ENCODE measurements at regions of chr4 and their contacts with region 1.

Region 1: GRCh38 chr4:9704551-9705332 is 76.7 kb upstream of the DRD5 start:
- DNase-seq: no peak
- ATAC-seq: no peak
- H3K4me3 ChIP-seq: no peak overlapping the region
- H3K27ac ChIP-seq: no peak overlapping the region
- H3K4me1 ChIP-seq: peaks cover 0 to 4% of the 10 kb centered on the region in 2 experiments; a peak in 2 of 5 replicates
- H3K27me3 ChIP-seq: peaks cover 0 to 5% of the 10 kb centered on the region in 2 experiments; a peak in 2 of 5 replicates
- CTCF ChIP-seq: no peak
- EP300 ChIP-seq: no peak
- POLR2A ChIP-seq: no peak
- RAD21 ChIP-seq: no peak

Region 2: DNA sequence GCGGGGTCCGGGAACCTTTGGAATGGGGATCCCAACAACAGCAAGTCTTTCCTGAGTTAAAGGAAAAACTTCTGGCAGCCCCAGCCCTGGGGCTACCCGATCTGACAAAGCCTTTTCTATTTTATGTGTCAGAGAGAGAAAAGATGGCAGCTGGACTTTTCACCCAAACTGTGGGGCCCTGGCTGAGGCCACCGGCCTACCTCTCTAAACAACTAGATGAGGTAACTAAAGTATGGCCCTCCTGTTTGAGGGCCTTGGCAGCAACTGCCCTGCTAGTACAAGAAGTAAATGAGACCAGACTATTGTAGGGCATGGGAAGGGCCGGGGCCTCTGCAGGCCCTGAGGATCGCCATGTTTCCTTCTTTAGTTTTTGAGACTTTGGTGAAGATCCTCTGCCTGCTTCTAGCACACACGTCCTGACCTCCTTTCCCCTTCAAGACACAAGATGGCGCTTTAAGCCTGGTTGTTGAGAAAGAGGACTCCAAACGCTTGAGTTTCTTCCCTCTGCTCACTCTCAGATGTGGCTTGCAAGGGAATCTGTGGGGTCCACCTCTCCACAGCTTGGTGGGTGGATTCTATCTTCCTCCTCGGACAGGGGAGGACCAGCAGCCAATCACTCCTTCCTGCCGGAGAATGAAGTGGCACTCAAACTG is 58.2 kb after region 1 on chr4:
- CTCF ChIA-PET with region 1: no interaction called
- POLR2A ChIA-PET with region 1: no interaction called
- in situ Hi-C with region 1: no loop called
- intact Hi-C with region 1: loop called (anchors 10 kb)
- DNase-seq: peak; percentile 40 to 64 (median 46)
- ATAC-seq: peak; percentile 72
- H3K4me3 ChIP-seq: no peak overlapping the region
- H3K27ac ChIP-seq: no peak overlapping the region
- H3K4me1 ChIP-seq: no peaks in the 10 kb centered on the region
- H3K27me3 ChIP-seq: peaks cover 0 to 7% of the 10 kb centered on the region in 2 experiments; a peak in 1 of 5 replicates
- CTCF ChIP-seq: peak; percentile 66 to 81 (median 70); a peak in 5 of 6 replicates
- EP300 ChIP-seq: no peak
- POLR2A ChIP-seq: no peak
- RAD21 ChIP-seq: peak; percentile 86 to 88

Region 3: DNA sequence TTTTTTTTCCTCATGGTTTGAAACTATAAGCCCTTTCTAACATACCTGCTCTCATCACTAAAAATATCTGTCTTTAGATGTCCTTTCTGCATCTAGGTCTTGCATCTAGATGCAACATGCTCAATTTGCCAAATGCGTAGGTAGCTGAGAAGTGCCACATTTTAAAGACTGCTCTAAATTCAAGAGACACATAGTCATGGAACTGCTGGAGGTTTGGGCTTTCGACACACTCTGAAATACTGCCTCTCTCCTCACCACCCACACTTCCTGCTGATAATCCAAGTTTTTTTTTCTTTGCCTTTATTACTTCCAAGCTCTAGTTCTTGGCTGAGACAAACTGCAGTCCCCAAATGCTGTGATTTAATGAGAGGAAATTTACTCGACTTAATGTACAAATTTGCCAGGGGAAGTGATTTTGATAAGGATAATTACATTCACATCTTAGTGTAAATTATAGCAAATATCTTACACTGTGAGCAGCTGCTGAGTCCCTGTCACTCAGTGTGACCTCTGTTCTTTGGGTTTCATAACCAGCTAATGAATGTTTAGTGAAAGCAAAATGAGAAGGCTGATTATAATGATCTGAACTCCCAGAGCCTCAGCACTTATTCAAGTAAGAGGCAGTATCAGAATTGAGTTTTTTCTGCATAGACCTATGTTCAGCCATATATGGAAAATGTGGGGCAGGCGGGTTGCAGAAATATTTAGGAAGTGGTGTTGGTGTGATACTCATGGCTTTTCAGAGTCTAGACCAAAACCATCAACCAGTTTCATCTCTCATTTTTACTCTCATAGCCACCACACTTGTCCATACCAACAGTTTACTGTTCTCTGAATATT is 108.0 kb after region 1 on chr4:
- CTCF ChIA-PET with region 1: no interaction called
- POLR2A ChIA-PET with region 1: no interaction called
- in situ Hi-C with region 1: no loop called
- intact Hi-C with region 1: no loop called
- DNase-seq: no peak
- ATAC-seq: no peak
- H3K4me3 ChIP-seq: no peak overlapping the region
- H3K27ac ChIP-seq: no peak overlapping the region
- H3K4me1 ChIP-seq: no peaks in the 10 kb centered on the region
- H3K27me3 ChIP-seq: 0 out of 5 replicates have a peak, but pooled peaks cover 0 to 4% of the 10 kb centered on the region in 2 experiments
- CTCF ChIP-seq: no peak
- EP300 ChIP-seq: no peak
- POLR2A ChIP-seq: no peak
- RAD21 ChIP-seq: no peak

Region 4: DNA sequence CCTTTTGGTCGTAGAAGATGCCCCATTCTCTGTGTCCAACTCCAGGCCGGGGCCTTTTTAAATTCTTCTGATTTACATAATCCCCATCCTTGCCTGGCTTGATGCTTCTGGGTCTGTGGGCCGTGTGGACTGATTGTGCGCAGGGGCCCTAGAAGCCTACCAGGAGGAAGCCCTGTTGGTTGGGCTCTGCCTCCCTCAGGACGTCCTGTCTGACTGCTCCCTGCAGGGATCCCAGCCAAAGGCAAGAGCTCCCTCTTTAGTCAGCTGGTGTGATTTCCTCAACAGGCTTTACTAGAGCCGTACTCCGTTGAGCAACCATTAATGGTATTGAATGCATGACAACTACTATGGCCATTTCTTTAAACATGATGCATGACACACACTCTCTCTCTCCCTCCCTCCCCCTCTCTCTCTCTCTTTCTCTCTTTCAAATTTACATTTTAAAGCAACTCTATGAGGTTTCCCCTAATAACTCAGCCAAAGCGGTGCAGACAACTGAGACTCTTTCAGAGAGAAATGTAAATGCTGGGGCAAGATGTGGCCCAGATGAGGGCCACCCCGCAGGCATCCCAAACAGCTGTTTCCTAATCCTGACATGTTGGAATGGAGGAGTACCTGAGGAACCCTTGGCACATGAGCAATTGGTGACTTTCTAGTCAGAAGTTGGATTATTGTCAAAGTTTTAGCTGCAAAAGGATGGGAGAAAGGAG is 194.0 kb after region 1 on chr4:
- CTCF ChIA-PET with region 1: no interaction called
- POLR2A ChIA-PET with region 1: no interaction called
- in situ Hi-C with region 1: no loop called
- intact Hi-C with region 1: loop called (anchors 10 kb)
- DNase-seq: peak in 2 of 4 experiments; percentile 22 to 33
- ATAC-seq: peak; percentile 90
- H3K4me3 ChIP-seq: no peak overlapping the region
- H3K27ac ChIP-seq: no peak overlapping the region
- H3K4me1 ChIP-seq: no peaks in the 10 kb centered on the region; a peak in 1 of 5 replicates
- H3K27me3 ChIP-seq: peaks cover 0 to 5% of the 10 kb centered on the region in 2 experiments; a peak in 1 of 5 replicates
- CTCF ChIP-seq: peak; percentile 53 to 66 (median 66)
- EP300 ChIP-seq: no peak
- POLR2A ChIP-seq: no peak
- RAD21 ChIP-seq: peak; percentile 49 to 71

Region 5: GRCh38 chr4:9924750-9925149 is 220.0 kb after region 1 on chr4:
- CTCF ChIA-PET with region 1: no interaction called
- POLR2A ChIA-PET with region 1: no interaction called
- in situ Hi-C with region 1: no loop called
- intact Hi-C with region 1: loop called (anchors 10 kb)
- DNase-seq: no peak
- ATAC-seq: peak; percentile 42; the same call in 1 of the 3 replicates
- H3K4me3 ChIP-seq: no peak overlapping the region
- H3K27ac ChIP-seq: no peak overlapping the region
- H3K4me1 ChIP-seq: no peaks in the 10 kb centered on the region; a peak in 1 of 5 replicates
- H3K27me3 ChIP-seq: peaks cover 0 to 29% of the 10 kb centered on the region in 2 experiments; a peak in 4 of 5 replicates
- CTCF ChIP-seq: no peak
- EP300 ChIP-seq: no peak
- POLR2A ChIP-seq: no peak
- RAD21 ChIP-seq: no peak

Region 6: GRCh38 chr4:10013722-10014121 is 309.0 kb after region 1 on chr4:
- CTCF ChIA-PET with region 1: no interaction called
- POLR2A ChIA-PET with region 1: no interaction called
- in situ Hi-C with region 1: loop called (anchors 5 kb)
- intact Hi-C with region 1: loop called (anchors 2 kb)
- DNase-seq: peak; percentile 64 to 71 (median 68)
- ATAC-seq: peak; percentile 91
- H3K4me3 ChIP-seq: no peak overlapping the region
- H3K27ac ChIP-seq: no peak overlapping the region
- H3K4me1 ChIP-seq: peaks cover 3 to 10% of the 10 kb centered on the region in 2 experiments; a peak in 3 of 5 replicates
- H3K27me3 ChIP-seq: peaks cover 0 to 6% of the 10 kb centered on the region in 2 experiments; a peak in 1 of 5 replicates
- CTCF ChIP-seq: peak; percentile 72 to 82 (median 75)
- EP300 ChIP-seq: no peak
- POLR2A ChIP-seq: no peak
- RAD21 ChIP-seq: peak; percentile 54 to 78

Region 7: GRCh38 chr4:10018818-10019461 is 314.2 kb after region 1 on chr4:
- CTCF ChIA-PET with region 1: no interaction called
- POLR2A ChIA-PET with region 1: no interaction called
- in situ Hi-C with region 1: loop called (anchors 5 kb)
- intact Hi-C with region 1: no loop called
- DNase-seq: peak; percentile 92 to 93 (median 92)
- ATAC-seq: peak; percentile 98
- H3K4me3 ChIP-seq: peak overlapping the region; percentile 25; the same call in 1 of the 2 replicates
- H3K27ac ChIP-seq: peak overlapping the region; percentile 55
- H3K4me1 ChIP-seq: peaks cover 6 to 12% of the 10 kb centered on the region in 2 experiments; a peak in 4 of 5 replicates
- H3K27me3 ChIP-seq: peaks cover 3 to 10% of the 10 kb centered on the region in 2 experiments; a peak in 3 of 5 replicates
- CTCF ChIP-seq: peak; percentile 99 to 100 (median 100)
- EP300 ChIP-seq: no peak
- POLR2A ChIP-seq: peak; percentile 66
- RAD21 ChIP-seq: peak; percentile 97 to 98

Measured in K562 (cell line).